Naive thymus-derived CD8-positive, alpha-beta T cell (primary cell): ENCODE measurements at regions of chr1 and their contacts with region 1.

Region 1: DNA sequence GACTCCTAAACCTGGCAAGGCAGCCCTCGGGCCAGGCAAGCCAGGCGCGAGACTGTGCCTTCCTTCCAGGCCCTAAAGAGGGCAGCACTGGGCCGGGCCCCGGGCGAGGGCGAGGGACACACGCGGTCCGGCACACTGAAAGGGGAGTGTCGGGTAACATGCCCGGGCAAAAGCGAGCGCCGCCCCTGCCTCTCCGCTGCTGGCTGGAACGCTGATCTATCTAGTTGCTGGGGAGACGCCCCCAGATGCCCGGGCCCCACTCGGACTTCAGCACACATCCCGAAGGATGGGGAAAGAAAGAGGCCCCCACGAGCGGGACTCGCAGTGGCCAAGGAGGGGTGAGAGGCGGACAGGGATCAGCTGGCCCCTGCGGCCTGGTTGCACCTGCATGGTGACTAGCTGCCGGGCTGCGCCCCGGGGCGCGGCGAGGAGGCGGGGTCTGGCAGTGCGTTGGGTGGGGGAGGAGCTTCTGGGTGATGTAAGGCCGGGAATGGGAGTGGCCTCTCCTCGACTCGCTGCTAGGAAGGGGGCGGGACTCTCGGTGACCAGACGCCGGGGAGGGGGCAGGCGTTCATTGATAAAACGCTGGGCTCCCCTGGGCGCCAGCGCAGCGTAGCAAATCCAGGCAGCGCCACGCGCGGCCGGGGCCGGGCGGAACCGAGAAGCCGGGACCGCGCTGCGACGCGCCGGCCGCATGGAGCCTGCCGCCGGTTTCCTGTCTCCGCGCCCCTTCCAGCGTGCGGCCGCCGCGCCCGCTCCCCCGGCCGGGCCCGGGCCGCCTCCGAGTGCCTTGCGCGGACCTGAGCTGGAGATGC is at the start of gene PLK3:
- DNase-seq: peak; percentile 97 to 99 (median 98)
- ATAC-seq: peak; percentile 78 to 81
- H3K4me3 Mint-ChIP-seq: peak within 1 kb of the TSS; percentile 72 to 99 (median 97)
- H3K27ac Mint-ChIP-seq: peak within 1 kb of the TSS; percentile 89 to 99 (median 99)
- H3K4me1 Mint-ChIP-seq: peaks cover 17 to 48% (median 45%) of the 10 kb centered on the region in 4 donors
- H3K27me3 Mint-ChIP-seq: no peaks in the 10 kb centered on the region
- polyA plus RNA-seq, gene PLK3: 14.3 to 36.0 (median 25.5) TPM

Region 2: DNA sequence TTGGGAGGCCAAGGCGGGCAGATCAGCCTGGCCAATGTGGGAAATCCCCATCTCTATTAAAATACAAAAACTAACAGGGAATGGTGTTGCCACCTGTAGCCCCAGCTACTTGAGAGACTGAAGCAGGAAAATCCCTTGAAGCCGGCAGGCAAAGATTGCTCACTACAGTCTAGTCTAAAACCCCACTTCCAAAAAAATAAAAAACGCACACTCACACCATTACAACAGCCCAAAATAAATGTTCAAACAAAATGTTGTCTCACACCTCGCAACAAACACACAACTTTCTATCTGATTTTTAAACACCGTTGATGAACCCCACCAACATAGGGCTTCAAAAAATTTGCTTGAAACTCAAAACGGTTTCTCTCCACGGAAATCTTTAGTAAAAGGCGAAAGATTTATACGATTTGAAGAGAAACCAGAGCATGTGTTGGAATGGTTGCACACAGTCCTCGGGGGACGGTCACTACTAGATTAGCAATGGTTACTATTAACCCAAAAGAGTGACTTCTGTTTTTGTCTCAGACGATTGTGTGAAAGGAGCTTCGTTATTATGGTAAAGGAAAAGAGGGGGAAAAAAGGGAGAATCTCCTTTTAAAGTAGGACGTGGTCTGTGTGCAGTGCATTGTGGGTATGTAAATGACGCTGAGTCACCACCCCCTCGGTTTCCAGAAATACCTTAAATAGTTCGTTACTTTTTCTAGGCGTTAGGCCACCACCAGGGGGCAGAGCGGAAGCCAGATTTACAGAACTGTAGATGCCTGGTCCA is 69.0 kb before region 1 on chr1 and contains the start of gene RNU5D-1:
- POLR2A ChIA-PET with region 1: interaction called, 28 read pairs
- DNase-seq: peak; percentile 84 to 96 (median 90)
- ATAC-seq: peak; percentile 80 to 83
- H3K4me3 Mint-ChIP-seq: peak within 1 kb of the TSS; percentile 53 to 89 (median 80)
- H3K27ac Mint-ChIP-seq: peak within 1 kb of the TSS; percentile 96 to 100 (median 99)
- H3K4me1 Mint-ChIP-seq: peaks cover 19 to 40% (median 32%) of the 10 kb centered on the region in 4 donors
- H3K27me3 Mint-ChIP-seq: no peaks in the 10 kb centered on the region
- polyA plus RNA-seq, gene RNU5D-1: not detected

Region 3: DNA sequence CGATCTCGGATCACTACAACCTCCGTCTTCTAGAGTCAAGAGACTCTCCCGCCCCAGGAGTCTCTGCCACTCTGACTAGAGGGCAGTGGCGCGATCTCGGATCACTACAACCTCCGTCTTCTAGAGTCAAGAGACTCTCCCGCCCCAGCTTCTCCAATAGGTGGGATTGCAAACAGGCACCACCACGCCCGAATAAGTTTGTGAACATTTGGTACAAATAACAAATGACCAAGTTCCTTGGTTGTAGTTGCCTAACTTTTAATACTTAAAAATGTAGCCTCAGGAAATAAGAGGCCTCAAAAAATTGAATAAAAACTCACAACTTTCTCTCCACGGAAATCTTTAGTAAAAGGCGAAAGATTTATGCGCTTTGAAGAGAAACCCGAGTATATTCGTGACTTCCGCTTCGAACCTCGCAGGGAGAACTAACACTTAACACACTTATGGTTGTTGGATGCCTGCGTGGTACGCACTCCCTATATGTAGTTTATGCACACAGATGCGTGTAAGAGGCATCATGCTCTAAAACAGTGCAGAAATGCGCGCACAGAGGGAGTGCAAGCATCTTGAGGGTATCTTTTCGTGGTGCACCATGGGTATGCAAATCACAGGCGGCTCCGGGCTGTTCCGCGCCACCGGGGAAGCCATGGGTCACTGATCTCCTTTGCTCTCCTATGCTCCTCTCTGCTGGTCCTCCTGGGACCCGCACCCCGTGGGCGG is 19.8 kb after region 1 on chr1:
- POLR2A ChIA-PET with region 1: interaction called, 590 read pairs
- DNase-seq: peak; percentile 61 to 98 (median 80)
- ATAC-seq: peak; percentile 78 to 79
- H3K4me3 Mint-ChIP-seq: peak overlapping the region; percentile 92 to 97 (median 94)
- H3K27ac Mint-ChIP-seq: peak overlapping the region; percentile 100
- H3K4me1 Mint-ChIP-seq: peaks cover 23 to 55% (median 42%) of the 10 kb centered on the region in 4 donors
- H3K27me3 Mint-ChIP-seq: no peaks in the 10 kb centered on the region

Region 4: GRCh38 chr1:44835738-44836675 is 36.0 kb after region 1 on chr1:
- POLR2A ChIA-PET with region 1: interaction called, 19 read pairs
- DNase-seq: peak; percentile 65 to 92 (median 78)
- ATAC-seq: peak; percentile 97 to 98
- H3K4me3 Mint-ChIP-seq: peak overlapping the region in 9 of 10 donors; percentile 23 to 58 (median 47)
- H3K27ac Mint-ChIP-seq: peak overlapping the region in 7 of 10 donors; percentile 4 to 67 (median 34)
- H3K4me1 Mint-ChIP-seq: peaks cover 7 to 11% (median 9%) of the 10 kb centered on the region in 4 donors
- H3K27me3 Mint-ChIP-seq: peaks cover 0 to 8% (median 0%) of the 10 kb centered on the region in 5 donors

Region 5: DNA sequence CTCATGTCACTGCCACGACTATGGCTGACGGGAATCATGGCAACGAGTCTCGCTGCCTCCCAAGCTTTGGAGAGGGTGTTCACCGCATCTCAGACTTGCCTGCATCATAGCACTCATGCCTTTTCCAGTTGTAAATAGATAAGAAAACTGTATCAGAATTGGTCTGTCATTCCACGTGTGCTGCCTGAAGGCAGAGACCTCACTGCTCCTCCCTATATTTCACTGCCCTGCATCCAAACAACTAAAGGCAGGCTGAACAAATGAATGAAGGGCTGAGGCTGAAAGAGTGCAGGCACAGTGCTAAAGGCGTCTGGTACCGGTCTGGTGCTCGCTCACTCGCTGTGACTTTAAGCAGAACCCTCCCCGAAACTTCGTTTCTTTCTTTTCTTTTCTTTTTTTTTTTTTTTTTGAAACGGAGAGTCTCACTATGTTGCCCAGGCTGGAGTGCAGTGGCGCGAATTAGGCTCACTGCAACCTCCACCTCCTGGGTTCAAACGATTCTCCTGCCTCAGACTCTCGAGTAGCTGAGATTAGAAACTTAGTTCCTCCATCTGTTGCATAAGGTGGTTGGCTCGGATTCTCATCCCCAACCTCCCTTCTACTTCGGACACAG is 185.9 kb after region 1 on chr1:
- POLR2A ChIA-PET with region 1: interaction called, 21 read pairs
- DNase-seq: no peak
- ATAC-seq: no peak
- H3K4me3 Mint-ChIP-seq: peak overlapping the region; percentile 94 to 100 (median 99)
- H3K27ac Mint-ChIP-seq: peak overlapping the region in 9 of 10 donors; percentile 88 to 97 (median 94)
- H3K4me1 Mint-ChIP-seq: peaks cover 9 to 27% (median 23%) of the 10 kb centered on the region in 4 donors
- H3K27me3 Mint-ChIP-seq: no peaks in the 10 kb centered on the region

Region 6: DNA sequence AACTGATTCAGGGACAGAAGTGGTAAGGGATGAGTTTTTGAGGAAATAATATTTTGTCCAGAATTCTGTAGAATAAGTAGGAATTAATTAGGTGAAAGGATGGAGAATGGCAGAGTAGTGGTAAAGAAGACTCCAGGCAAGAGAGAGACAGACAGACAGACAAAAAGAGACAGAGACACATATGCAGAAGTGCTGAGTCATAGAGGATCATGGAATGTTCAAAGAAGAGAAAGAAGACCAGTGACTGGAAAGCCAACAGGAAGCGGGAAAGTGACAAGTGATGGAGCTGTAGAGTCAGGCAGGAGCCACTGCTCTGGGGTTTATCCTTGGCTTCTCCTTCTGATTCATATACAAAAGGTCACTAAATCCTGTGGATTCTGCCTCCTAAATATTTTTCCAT is 298.0 kb after region 1 on chr1:
- POLR2A ChIA-PET with region 1: no interaction called
- DNase-seq: no peak
- ATAC-seq: no peak
- H3K4me3 Mint-ChIP-seq: no peak overlapping the region
- H3K27ac Mint-ChIP-seq: peak overlapping the region in 1 of 10 donors; percentile 31
- H3K4me1 Mint-ChIP-seq: peaks cover 0 to 3% (median under 1%) of the 10 kb centered on the region in 4 donors
- H3K27me3 Mint-ChIP-seq: peaks cover 0 to 11% (median 0%) of the 10 kb centered on the region in 5 donors